Natural killer cell (primary cell): ENCODE measurements at regions of chr4 and their contacts with region 1.

Region 1: GRCh38 chr4:10582059-10582686 is 102.4 kb downstream of the CLNK start:
- DNase-seq: peak in 1 of 2 donors; percentile 57
- ATAC-seq: peak in 1 of 3 donors; percentile 57
- H3K4me3 ChIP-seq: no peak overlapping the region
- H3K4me3 Mint-ChIP-seq: no peak overlapping the region
- H3K27ac ChIP-seq: no peak overlapping the region
- H3K27ac Mint-ChIP-seq: no peak overlapping the region
- H3K4me1 ChIP-seq: peaks cover 4% of the 10 kb centered on the region
- H3K4me1 Mint-ChIP-seq: peaks cover 21% of the 10 kb centered on the region in 2 donors
- H3K27me3 ChIP-seq: no peaks in the 10 kb centered on the region
- H3K27me3 Mint-ChIP-seq: no peaks in the 10 kb centered on the region
- CTCF ChIP-seq: peak; percentile 82

Region 2: DNA sequence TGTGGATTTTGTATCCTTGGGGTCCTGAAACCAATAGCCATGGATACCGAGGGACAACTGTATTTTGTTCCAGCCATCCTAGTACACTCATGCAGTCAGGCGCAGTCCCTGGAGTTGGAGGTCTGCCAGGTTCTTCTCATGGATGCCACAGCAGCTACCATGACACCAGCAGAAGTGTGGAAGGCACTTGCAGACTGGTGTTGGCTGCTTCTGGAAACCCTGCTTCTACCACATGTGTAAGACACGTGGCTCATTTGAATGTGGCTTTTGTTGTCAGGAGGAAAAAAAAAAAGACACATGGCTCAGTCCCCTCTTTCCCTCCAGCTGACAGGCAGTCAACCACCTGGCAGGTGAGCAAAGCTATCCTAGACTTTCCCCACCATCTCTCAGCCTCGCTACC is 781.3 kb before region 1 on chr4:
- intact Hi-C with region 1: no loop called
- DNase-seq: no peak
- ATAC-seq: no peak
- H3K4me3 ChIP-seq: no peak overlapping the region
- H3K4me3 Mint-ChIP-seq: no peak overlapping the region
- H3K27ac ChIP-seq: no peak overlapping the region
- H3K27ac Mint-ChIP-seq: no peak overlapping the region
- H3K4me1 ChIP-seq: no peaks in the 10 kb centered on the region
- H3K4me1 Mint-ChIP-seq: no peaks in the 10 kb centered on the region
- H3K27me3 ChIP-seq: no peaks in the 10 kb centered on the region
- H3K27me3 Mint-ChIP-seq: peaks cover 14 to 49% of the 10 kb centered on the region in 2 donors
- CTCF ChIP-seq: no peak

Region 3: GRCh38 chr4:10333942-10334341 is 248.2 kb before region 1 on chr4:
- intact Hi-C with region 1: no loop called
- DNase-seq: no peak
- ATAC-seq: no peak
- H3K4me3 ChIP-seq: no peak overlapping the region
- H3K4me3 Mint-ChIP-seq: no peak overlapping the region
- H3K27ac ChIP-seq: no peak overlapping the region
- H3K27ac Mint-ChIP-seq: no peak overlapping the region
- H3K4me1 ChIP-seq: no peaks in the 10 kb centered on the region
- H3K4me1 Mint-ChIP-seq: no peaks in the 10 kb centered on the region
- H3K27me3 ChIP-seq: peaks cover 2% of the 10 kb centered on the region
- H3K27me3 Mint-ChIP-seq: peaks cover 6 to 40% of the 10 kb centered on the region in 2 donors
- CTCF ChIP-seq: no peak

Region 4: DNA sequence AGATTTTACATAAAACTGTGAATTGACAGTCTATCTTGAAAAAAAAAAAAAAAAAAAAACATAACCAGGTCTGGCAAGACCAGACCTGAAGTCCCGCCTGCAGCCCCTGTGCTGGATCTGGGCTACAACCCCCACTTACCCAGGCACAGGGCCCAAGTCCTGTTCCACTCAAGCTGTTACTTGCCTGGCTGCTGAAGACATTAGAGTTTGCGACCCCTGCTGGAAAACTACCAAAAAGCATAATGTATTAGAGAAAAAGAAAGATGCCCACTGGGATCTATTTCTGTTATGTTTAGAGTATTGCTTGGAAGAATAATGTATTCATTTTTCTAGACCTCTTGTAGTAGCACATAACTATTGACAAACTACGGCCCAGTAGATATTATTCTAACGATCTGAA is 841.8 kb after region 1 on chr4:
- intact Hi-C with region 1: loop called (anchors 1 kb)
- DNase-seq: peak in 1 of 2 donors; percentile 58
- ATAC-seq: peak in 1 of 3 donors; percentile 53
- H3K4me3 ChIP-seq: no peak overlapping the region
- H3K4me3 Mint-ChIP-seq: no peak overlapping the region
- H3K27ac ChIP-seq: no peak overlapping the region
- H3K27ac Mint-ChIP-seq: no peak overlapping the region
- H3K4me1 ChIP-seq: peaks cover 17% of the 10 kb centered on the region
- H3K4me1 Mint-ChIP-seq: peaks cover 11 to 19% of the 10 kb centered on the region in 2 donors
- H3K27me3 ChIP-seq: peaks cover 15% of the 10 kb centered on the region
- H3K27me3 Mint-ChIP-seq: peaks cover 23 to 39% of the 10 kb centered on the region in 2 donors
- CTCF ChIP-seq: peak; percentile 29

Region 5: GRCh38 chr4:11720292-11720691 is 1138.1 kb after region 1 on chr4:
- intact Hi-C with region 1: loop called (anchors 5 kb)
- DNase-seq: peak in 1 of 2 donors; percentile 16
- ATAC-seq: no peak
- H3K4me3 ChIP-seq: no peak overlapping the region
- H3K4me3 Mint-ChIP-seq: no peak overlapping the region
- H3K27ac ChIP-seq: no peak overlapping the region
- H3K27ac Mint-ChIP-seq: no peak overlapping the region
- H3K4me1 ChIP-seq: no peaks in the 10 kb centered on the region
- H3K4me1 Mint-ChIP-seq: no peaks in the 10 kb centered on the region
- H3K27me3 ChIP-seq: no peaks in the 10 kb centered on the region
- H3K27me3 Mint-ChIP-seq: no peaks in the 10 kb centered on the region
- CTCF ChIP-seq: no peak